ENCODE measurements at regions of chr1 and their contacts with region 1.

Region 1: DNA sequence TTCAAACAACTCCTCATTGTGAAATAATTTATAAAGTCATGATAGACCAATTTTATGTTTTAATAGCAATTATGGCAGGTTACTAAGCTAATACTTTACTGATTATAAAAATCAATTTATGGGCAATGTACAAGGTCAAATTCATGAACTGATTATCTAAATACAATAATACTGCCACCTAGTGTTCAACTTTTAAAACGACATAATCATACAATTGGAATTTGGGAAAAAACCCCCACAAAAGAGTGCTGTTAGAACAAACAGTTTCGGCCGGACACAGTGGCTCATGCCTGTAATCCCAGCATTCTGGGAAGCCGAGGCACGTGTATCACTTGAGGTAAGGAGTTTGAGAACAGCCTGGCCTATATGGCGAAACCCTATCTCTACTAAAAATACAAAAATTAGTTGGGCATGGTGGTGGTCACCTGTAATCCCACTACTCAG is 14.0 kb downstream of the GTF2B start:
- H3K4me3 ChIP-seq: no peak overlapping the region
- H3K27ac ChIP-seq: no peak overlapping the region
- H3K4me1 ChIP-seq: peaks cover under 1% of the 10 kb centered on the region; the same call in 1 of the 2 replicates
- CTCF ChIP-seq: no peak

Region 2: GRCh38 chr1:88655685-88656299 is 221.6 kb before region 1 on chr1:
- CTCF ChIA-PET with region 1: interaction called, 17 read pairs
- POLR2A ChIA-PET with region 1: no interaction called
- H3K4me3 ChIP-seq: no peak overlapping the region
- H3K27ac ChIP-seq: no peak overlapping the region
- H3K4me1 ChIP-seq: no peaks in the 10 kb centered on the region
- CTCF ChIP-seq: no peak

Region 3: DNA sequence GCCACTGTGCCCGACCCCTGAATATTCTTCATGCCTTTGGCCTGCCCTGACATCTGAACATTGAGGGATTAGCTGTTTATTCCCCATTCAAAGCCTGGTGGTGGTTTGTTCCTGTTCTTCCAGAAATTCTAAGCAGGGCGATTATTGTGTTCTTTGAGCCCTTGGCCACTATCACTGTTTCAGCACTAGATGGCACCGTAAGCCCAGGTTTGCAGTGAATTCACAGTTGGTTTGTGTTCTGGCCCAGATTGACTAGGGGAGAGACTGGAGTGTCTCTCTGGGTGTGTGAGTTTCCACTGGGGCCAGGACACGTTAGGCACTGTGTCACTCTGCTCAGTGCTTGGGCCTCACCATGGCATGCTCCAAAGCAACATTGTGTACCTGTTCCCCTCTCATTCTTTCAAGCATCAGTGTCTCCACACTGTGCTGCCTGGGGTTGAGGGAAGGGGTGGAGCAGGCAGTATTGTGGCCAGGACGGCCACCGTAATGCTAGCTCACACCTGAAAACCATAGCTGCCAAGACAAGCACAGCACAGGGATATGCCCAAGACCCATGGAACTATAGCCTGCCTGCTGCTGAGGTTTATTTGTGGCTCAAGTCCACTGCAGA is 140.7 kb before region 1 on chr1:
- CTCF ChIA-PET with region 1: interaction called, 13 read pairs
- POLR2A ChIA-PET with region 1: no interaction called
- H3K4me3 ChIP-seq: no peak overlapping the region
- H3K27ac ChIP-seq: no peak overlapping the region
- H3K4me1 ChIP-seq: no peaks in the 10 kb centered on the region
- CTCF ChIP-seq: no peak

Region 4: DNA sequence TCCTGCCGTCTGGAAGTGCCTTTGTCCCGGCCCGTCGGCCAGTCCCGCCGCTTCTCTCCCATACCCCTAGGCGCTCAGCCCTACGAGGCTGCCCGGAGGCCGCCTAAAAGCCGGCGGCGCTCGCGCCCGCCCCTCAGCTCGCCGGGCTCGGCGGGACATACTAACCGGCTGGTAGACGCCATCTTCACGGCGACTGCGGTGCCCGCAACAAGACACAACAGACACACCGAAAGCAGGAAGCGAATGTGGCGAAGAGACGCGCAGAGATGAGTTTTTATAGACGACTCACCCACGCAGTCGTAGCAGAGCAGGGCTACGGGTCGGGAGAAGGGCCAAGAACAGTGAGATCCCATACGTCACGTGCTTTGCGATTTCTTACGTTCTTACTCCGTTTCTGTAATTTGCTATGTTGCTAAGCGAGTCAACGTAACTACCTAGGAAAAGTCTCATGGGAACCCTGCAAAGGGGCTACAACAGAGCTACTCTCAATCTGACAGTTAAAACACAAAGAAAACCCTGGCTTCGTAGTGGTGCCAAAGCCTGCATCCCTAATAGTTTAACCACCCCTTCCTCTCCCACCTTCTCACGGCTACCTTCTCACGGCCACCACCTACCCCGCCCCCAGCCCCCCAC is 14.0 kb after region 1 on chr1 and contains the start of gene GTF2B:
- CTCF ChIA-PET with region 1: interaction called, 20 read pairs
- POLR2A ChIA-PET with region 1: no interaction called
- H3K4me3 ChIP-seq: peak within 1 kb of the TSS; percentile 99
- H3K27ac ChIP-seq: peak within 1 kb of the TSS; percentile 59
- H3K4me1 ChIP-seq: peaks cover 10% of the 10 kb centered on the region; the same call in 1 of the 2 replicates
- CTCF ChIP-seq: peak; percentile 40; the same call in 1 of the 2 replicates

Region 5: DNA sequence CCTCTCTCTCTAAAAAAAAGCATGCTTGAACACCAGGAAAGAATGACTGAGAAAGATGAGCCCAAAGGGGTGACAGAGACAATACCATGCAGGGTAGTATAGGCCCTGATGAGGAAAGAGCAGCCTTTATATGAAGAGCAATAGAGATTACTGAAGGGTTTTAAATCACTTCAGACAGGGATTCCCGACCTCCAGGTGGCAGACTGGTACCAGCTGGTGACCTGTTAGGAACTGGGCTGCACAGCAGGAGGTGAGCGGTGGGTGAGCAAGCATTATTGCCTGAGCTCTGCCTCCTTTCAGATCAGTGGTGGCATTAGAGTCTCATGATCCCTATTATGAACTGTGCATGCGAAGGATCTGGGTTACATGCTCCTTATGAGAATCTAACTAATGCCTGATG is 44.8 kb after region 1 on chr1:
- CTCF ChIA-PET with region 1: no interaction called
- POLR2A ChIA-PET with region 1: no interaction called
- H3K4me3 ChIP-seq: no peak overlapping the region
- H3K27ac ChIP-seq: no peak overlapping the region
- H3K4me1 ChIP-seq: no peaks in the 10 kb centered on the region
- CTCF ChIP-seq: no peak